SK-N-SH (cell line): ENCODE measurements at regions of chr13 and their contacts with region 1.

Region 1: DNA sequence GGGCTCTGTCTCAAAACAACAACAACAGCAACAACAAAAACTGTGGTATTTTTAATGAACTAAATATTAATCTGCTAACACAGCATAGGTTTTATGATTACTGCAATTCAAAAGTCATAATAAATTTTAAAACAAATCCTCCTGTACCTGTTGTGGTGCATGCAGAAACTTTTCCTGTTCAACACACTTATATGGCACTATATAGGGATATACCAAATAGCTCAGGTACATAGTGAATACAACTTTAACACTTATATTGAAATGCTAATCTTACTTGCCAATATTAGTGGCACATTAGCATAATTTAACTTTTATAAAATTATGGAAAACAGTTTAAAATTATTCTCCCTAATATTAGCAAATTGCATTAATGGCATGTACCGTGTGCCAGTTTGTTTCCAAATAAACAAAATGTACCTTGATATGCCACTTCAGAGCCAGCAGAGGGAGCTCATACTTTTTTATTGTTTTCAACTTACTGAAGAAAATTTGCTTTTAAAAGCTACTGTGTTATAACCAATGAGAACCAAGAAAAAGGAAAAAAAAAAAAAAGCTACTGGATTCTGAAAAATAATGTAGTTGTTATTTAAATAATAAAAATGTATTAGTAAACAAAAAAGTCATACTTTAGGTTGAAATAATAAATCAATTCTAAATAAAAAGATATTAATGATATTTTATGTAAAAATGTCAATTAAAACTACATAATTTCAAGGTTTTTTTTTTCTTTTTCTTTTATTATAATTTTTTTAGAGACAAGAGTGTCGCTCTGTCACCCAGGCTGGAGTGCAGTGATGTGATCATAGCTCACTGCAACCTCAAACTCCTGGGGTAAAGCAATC is 18.0 kb upstream of the RBM26 start:
- DNase-seq: peak; percentile 45
- H3K4me3 ChIP-seq: no peak overlapping the region; a peak in 1 of 4 replicates
- H3K27ac ChIP-seq: no peak overlapping the region
- H3K4me1 ChIP-seq: no peaks in the 10 kb centered on the region
- H3K27me3 ChIP-seq: no peaks in the 10 kb centered on the region
- CTCF ChIP-seq: peak; percentile 81
- EP300 ChIP-seq: no peak
- RAD21 ChIP-seq: peak; percentile 80

Region 2: GRCh38 chr13:79408352-79408751 is 15.7 kb before region 1 on chr13:
- CTCF ChIA-PET with region 1: interaction called, 20 read pairs
- POLR2A ChIA-PET with region 1: interaction called, 3 read pairs
- DNase-seq: no peak
- H3K4me3 ChIP-seq: no peak overlapping the region
- H3K27ac ChIP-seq: no peak overlapping the region
- H3K4me1 ChIP-seq: peaks cover 5 to 10% of the 10 kb centered on the region in 2 experiments; a peak in 3 of 4 replicates
- H3K27me3 ChIP-seq: no peaks in the 10 kb centered on the region
- CTCF ChIP-seq: no peak
- EP300 ChIP-seq: no peak
- RAD21 ChIP-seq: no peak

Region 3: DNA sequence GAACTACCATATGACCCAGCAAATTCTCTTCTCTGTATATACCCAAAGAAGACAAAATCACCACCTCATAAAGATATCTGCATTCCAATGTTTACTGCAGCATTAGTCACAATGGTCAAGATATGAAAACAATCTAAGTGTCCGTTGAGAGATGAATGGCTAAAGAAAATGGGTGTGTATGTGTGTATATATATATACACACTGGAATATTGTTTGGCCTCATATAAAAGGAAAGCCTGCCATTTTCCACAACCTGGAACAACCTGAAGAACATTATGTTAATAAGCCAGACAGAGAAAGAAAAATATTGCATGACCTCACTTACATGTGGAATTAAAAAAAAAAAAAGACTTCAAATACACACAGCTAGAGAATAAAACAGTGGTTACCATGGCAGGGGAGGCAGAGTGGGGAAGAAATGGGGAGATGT is 11.6 kb after region 1 on chr13:
- CTCF ChIA-PET with region 1: interaction called, 11 read pairs
- POLR2A ChIA-PET with region 1: no interaction called
- DNase-seq: no peak
- H3K4me3 ChIP-seq: no peak overlapping the region
- H3K27ac ChIP-seq: peak overlapping the region in 1 of 2 experiments; percentile 51; a peak in 2 of 4 replicates
- H3K4me1 ChIP-seq: peaks cover 0 to 4% of the 10 kb centered on the region in 2 experiments; a peak in 1 of 4 replicates
- H3K27me3 ChIP-seq: no peaks in the 10 kb centered on the region
- CTCF ChIP-seq: no peak
- EP300 ChIP-seq: no peak
- RAD21 ChIP-seq: no peak

Region 4: DNA sequence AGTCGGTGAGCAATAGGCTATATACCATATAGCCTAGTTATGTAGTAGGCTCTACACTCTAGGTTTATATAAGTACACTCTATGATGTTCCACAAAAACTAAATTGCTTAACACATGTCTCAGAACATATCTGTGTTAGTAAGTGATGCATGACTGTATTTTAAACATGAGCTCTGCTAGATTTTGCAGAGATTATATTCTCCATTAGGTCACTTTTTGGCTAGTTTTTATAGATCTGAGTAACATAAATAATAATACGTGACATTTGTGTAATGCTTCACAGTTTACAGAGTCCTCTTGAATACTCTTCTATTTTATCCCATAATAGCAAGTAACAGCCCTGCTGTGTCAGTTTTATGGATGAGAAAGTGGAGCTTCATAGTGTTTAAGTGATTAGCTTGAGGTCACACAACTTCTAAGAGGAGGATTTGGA is 104.8 kb after region 1 on chr13:
- CTCF ChIA-PET with region 1: interaction called, 16 read pairs
- POLR2A ChIA-PET with region 1: no interaction called
- DNase-seq: no peak
- H3K4me3 ChIP-seq: no peak overlapping the region
- H3K27ac ChIP-seq: no peak overlapping the region
- H3K4me1 ChIP-seq: no peaks in the 10 kb centered on the region; a peak in 2 of 4 replicates
- H3K27me3 ChIP-seq: no peaks in the 10 kb centered on the region
- CTCF ChIP-seq: no peak
- EP300 ChIP-seq: no peak
- RAD21 ChIP-seq: no peak

Region 5: DNA sequence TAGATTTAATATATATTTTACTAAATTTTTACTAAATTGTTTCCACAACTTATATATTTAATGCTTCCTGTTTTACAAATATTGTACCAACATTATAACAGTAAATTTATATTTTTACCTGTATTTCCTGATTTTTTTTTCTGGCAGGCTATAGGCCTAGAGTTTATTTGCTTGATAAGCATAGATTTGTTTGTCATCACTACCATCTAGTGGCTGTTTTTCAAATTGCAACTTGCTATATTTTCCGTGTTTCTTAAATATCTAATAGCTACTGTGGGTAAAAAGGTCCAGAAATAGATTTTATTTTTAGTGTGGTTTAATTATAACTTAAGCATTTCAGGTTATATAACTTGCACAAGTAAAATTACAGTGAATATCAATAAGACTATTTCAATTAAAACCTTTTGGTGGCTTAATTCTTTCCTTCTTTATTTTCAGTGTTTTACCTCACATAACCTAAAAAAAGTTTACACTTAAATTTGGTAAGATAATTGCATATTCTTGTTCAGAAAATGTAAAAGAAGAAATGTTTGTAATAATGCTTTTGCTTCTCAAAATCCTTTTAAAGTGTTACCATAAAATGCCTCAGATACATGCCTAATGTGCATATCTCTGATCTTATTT is 117.5 kb after region 1 on chr13:
- CTCF ChIA-PET with region 1: interaction called, 99 read pairs
- POLR2A ChIA-PET with region 1: no interaction called
- DNase-seq: peak; percentile 21
- H3K4me3 ChIP-seq: no peak overlapping the region; a peak in 1 of 4 replicates
- H3K27ac ChIP-seq: peak overlapping the region in 1 of 2 experiments; percentile 16; a peak in 1 of 4 replicates
- H3K4me1 ChIP-seq: peaks cover 0 to 3% of the 10 kb centered on the region in 2 experiments; a peak in 2 of 4 replicates
- H3K27me3 ChIP-seq: no peaks in the 10 kb centered on the region
- CTCF ChIP-seq: peak; percentile 89
- EP300 ChIP-seq: no peak
- RAD21 ChIP-seq: peak; percentile 92

Region 6: GRCh38 chr13:80342471-80343380 is 918.7 kb after region 1 on chr13:
- CTCF ChIA-PET with region 1: interaction called, 10 read pairs
- POLR2A ChIA-PET with region 1: no interaction called
- DNase-seq: peak; percentile 84
- H3K4me3 ChIP-seq: peak overlapping the region; percentile 65 to 76
- H3K27ac ChIP-seq: peak overlapping the region; percentile 95 to 100; a peak in 3 of 4 replicates
- H3K4me1 ChIP-seq: peaks cover 5 to 8% of the 10 kb centered on the region in 2 experiments; a peak in 3 of 4 replicates
- H3K27me3 ChIP-seq: no peaks in the 10 kb centered on the region
- CTCF ChIP-seq: peak; percentile 85
- EP300 ChIP-seq: no peak
- RAD21 ChIP-seq: peak; percentile 80